T-cell (primary cell): ENCODE measurements at regions of chr3 and their contacts with region 1.

Region 1: GRCh38 chr3:7710284-7710683 is 791.3 kb upstream of the LMCD1 start:
- DNase-seq: no peak
- ATAC-seq: no peak
- H3K4me3 ChIP-seq: no peak overlapping the region
- H3K4me3 Mint-ChIP-seq: no peak overlapping the region
- H3K27ac ChIP-seq: no peak overlapping the region
- H3K27ac Mint-ChIP-seq: no peak overlapping the region
- H3K4me1 ChIP-seq: no peaks in the 10 kb centered on the region
- H3K4me1 Mint-ChIP-seq: peaks cover 4 to 11% (median 6%) of the 10 kb centered on the region in 3 donors
- H3K27me3 ChIP-seq: no peaks in the 10 kb centered on the region
- H3K27me3 Mint-ChIP-seq: no peaks in the 10 kb centered on the region

Region 2: DNA sequence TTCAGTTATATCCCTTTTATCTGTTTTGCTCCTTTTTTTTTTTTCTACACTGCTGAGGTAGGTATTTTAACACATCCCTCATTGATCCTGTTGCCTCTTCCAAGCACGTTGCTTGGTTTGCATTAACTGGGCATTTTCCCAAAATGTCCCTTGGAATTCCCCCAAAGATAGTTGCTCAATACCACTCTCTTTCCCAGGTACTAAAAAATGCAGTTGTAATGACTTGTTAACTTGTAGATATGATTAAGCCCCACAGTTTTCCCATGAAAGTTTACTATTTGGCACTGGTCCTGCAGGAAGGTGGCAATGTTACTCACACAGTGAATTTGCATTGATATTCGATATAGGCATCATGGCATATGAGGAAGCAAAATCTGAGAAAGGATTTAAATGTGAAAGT is 782.2 kb before region 1 on chr3:
- CTCF ChIA-PET with region 1: no interaction called
- POLR2A ChIA-PET with region 1: no interaction called
- DNase-seq: no peak
- ATAC-seq: no peak
- H3K4me3 ChIP-seq: no peak overlapping the region
- H3K4me3 Mint-ChIP-seq: no peak overlapping the region
- H3K27ac ChIP-seq: no peak overlapping the region
- H3K27ac Mint-ChIP-seq: no peak overlapping the region
- H3K4me1 ChIP-seq: no peaks in the 10 kb centered on the region
- H3K4me1 Mint-ChIP-seq: no peaks in the 10 kb centered on the region
- H3K27me3 ChIP-seq: no peaks in the 10 kb centered on the region
- H3K27me3 Mint-ChIP-seq: no peaks in the 10 kb centered on the region

Region 3: DNA sequence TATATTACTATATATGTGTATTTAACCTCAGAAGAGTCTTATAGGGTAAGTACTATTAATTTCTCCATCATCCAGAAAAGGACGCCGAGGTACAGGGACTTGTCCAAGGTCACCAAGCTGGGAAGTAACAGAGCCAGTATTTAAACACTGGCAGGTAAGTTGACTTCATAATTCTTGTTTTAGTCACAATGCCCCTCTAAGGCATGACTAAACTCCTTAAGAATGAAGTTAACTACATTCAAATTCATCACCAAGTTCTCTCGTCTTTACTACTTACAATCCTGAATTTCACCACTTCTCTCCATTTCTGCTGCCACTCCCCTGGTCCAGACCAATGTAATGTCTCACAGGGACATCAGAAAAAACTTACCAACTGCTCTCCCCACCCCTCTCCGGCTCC is 537.3 kb before region 1 on chr3:
- CTCF ChIA-PET with region 1: no interaction called
- POLR2A ChIA-PET with region 1: interaction called in 1 of 2 experiments, 11 read pairs
- DNase-seq: no peak
- ATAC-seq: no peak
- H3K4me3 ChIP-seq: no peak overlapping the region
- H3K4me3 Mint-ChIP-seq: no peak overlapping the region
- H3K27ac ChIP-seq: no peak overlapping the region
- H3K27ac Mint-ChIP-seq: no peak overlapping the region
- H3K4me1 ChIP-seq: no peaks in the 10 kb centered on the region
- H3K4me1 Mint-ChIP-seq: no peaks in the 10 kb centered on the region
- H3K27me3 ChIP-seq: no peaks in the 10 kb centered on the region
- H3K27me3 Mint-ChIP-seq: no peaks in the 10 kb centered on the region